CD4-positive, alpha-beta memory T cell (primary cell): ENCODE measurements at regions of chr13 and their contacts with region 1.

Region 1: DNA sequence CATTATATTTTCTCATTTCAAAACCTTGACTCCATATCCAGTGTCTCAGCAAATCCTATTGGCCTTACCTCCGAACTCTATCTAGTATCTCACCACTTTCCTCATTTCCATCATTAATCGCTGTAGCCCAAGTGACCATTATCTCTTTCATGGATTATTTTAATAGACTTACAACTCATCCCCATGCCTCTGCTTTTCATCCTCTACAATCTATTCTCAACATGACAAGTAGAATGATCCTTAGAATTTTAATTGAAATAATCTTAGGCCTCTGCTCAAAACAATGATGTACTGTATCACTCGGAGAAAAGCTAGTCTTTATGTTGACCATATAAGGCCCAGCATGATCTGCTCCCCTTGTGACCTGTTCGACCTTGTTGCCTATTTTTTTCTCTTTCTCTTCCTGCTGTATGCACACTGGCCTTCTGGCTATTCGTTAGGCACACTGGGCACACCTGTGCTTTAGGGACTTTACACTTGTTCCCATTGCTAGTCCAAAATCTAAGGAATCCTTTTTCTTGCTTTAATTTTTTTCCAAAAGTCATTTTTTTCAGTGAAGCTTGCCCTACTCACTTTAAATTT is 21.4 kb downstream of the DNAJC15 start:
- DNase-seq: no peak
- H3K4me3 ChIP-seq: no peak overlapping the region
- H3K4me3 Mint-ChIP-seq: peak overlapping the region; percentile 38 to 80 (median 55)
- H3K27ac ChIP-seq: peak overlapping the region; percentile 16
- H3K27ac Mint-ChIP-seq: peak overlapping the region; percentile 64 to 88 (median 77)
- H3K4me1 ChIP-seq: peaks cover 36% of the 10 kb centered on the region
- H3K4me1 Mint-ChIP-seq: peaks cover 39 to 80% (median 56%) of the 10 kb centered on the region in 4 donors
- H3K27me3 ChIP-seq: no peaks in the 10 kb centered on the region
- H3K27me3 Mint-ChIP-seq: no peaks in the 10 kb centered on the region

Region 2: GRCh38 chr13:41502673-41503072 is 1542.1 kb before region 1 on chr13:
- CTCF ChIA-PET with region 1: no interaction called
- POLR2A ChIA-PET with region 1: no interaction called
- intact Hi-C with region 1: no loop called
- DNase-seq: peak; percentile 35 to 47 (median 40)
- H3K4me3 ChIP-seq: no peak overlapping the region
- H3K4me3 Mint-ChIP-seq: peak overlapping the region in 6 of 8 donors; percentile 12 to 59 (median 45)
- H3K27ac ChIP-seq: no peak overlapping the region
- H3K27ac Mint-ChIP-seq: peak overlapping the region; percentile 10 to 88 (median 77)
- H3K4me1 ChIP-seq: peaks cover 50% of the 10 kb centered on the region
- H3K4me1 Mint-ChIP-seq: peaks cover 32 to 53% (median 49%) of the 10 kb centered on the region in 4 donors
- H3K27me3 ChIP-seq: no peaks in the 10 kb centered on the region
- H3K27me3 Mint-ChIP-seq: no peaks in the 10 kb centered on the region

Region 3: GRCh38 chr13:43006893-43007631 is 37.7 kb before region 1 on chr13:
- CTCF ChIA-PET with region 1: no interaction called
- POLR2A ChIA-PET with region 1: no interaction called
- intact Hi-C with region 1: no loop called
- DNase-seq: no peak
- H3K4me3 ChIP-seq: no peak overlapping the region
- H3K4me3 Mint-ChIP-seq: no peak overlapping the region
- H3K27ac ChIP-seq: no peak overlapping the region
- H3K27ac Mint-ChIP-seq: no peak overlapping the region
- H3K4me1 ChIP-seq: no peaks in the 10 kb centered on the region
- H3K4me1 Mint-ChIP-seq: no peaks in the 10 kb centered on the region
- H3K27me3 ChIP-seq: no peaks in the 10 kb centered on the region
- H3K27me3 Mint-ChIP-seq: peaks cover 2 to 4% of the 10 kb centered on the region in 2 donors

Region 4: DNA sequence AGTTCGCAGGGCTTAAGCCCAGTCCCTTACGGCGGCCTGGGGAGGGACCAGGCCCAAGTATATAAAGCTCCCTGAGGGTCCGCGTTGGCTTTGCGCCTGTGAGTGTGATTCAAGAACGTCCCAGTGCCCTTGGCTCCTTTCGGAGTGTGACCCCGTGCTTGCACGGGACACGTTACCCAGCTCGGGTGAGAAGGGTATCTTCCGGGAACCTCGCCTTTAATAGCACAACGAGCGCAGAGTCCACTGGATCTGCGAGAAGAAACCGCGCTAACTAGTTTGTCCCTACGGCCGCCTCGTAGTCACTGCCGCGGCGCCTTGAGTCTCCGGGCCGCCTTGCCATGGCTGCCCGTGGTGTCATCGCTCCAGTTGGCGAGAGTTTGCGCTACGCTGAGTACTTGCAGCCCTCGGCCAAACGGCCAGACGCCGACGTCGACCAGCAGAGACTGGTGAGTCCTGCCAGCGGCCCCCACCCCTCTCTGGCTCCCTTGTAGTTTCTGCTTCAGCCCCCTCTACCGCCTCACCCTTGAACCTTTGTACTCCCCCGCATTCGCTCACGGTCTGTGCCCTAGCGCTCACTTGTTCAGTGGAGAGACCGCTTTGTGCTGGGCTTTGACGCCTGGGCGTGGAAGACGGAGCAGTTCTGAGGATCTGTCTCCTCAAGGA is 21.4 kb before region 1 on chr13 and contains the start of gene DNAJC15:
- CTCF ChIA-PET with region 1: interaction called, 3 read pairs
- POLR2A ChIA-PET with region 1: interaction called, 7 read pairs
- intact Hi-C with region 1: loop called (anchors 2 kb)
- DNase-seq: peak; percentile 81 to 87 (median 84)
- H3K4me3 ChIP-seq: peak within 1 kb of the TSS; percentile 85 to 92
- H3K4me3 Mint-ChIP-seq: peak within 1 kb of the TSS; percentile 90 to 100 (median 98)
- H3K27ac ChIP-seq: peak within 1 kb of the TSS; percentile 66
- H3K27ac Mint-ChIP-seq: peak within 1 kb of the TSS; percentile 87 to 99 (median 98)
- H3K4me1 ChIP-seq: peaks cover 35% of the 10 kb centered on the region
- H3K4me1 Mint-ChIP-seq: peaks cover 19 to 42% (median 32%) of the 10 kb centered on the region in 4 donors
- H3K27me3 ChIP-seq: no peaks in the 10 kb centered on the region
- H3K27me3 Mint-ChIP-seq: no peaks in the 10 kb centered on the region
- total RNA-seq, gene DNAJC15: 9.7 to 11.1 TPM